IMR-90 (cell line): ENCODE measurements at regions of chr10 and their contacts with region 1.

Region 1: GRCh38 chr10:71840177-71840957 is 10.7 kb downstream of the PSAP start:
- DNase-seq: peak; percentile 96
- ATAC-seq: peak; percentile 86
- H3K4me3 ChIP-seq: no peak overlapping the region
- H3K27ac ChIP-seq: no peak overlapping the region
- H3K4me1 ChIP-seq: peaks cover 25% of the 10 kb centered on the region
- H3K27me3 ChIP-seq: no peaks in the 10 kb centered on the region
- CTCF ChIP-seq: no peak
- POLR2A ChIP-seq: no peak
- RAD21 ChIP-seq: no peak

Region 2: DNA sequence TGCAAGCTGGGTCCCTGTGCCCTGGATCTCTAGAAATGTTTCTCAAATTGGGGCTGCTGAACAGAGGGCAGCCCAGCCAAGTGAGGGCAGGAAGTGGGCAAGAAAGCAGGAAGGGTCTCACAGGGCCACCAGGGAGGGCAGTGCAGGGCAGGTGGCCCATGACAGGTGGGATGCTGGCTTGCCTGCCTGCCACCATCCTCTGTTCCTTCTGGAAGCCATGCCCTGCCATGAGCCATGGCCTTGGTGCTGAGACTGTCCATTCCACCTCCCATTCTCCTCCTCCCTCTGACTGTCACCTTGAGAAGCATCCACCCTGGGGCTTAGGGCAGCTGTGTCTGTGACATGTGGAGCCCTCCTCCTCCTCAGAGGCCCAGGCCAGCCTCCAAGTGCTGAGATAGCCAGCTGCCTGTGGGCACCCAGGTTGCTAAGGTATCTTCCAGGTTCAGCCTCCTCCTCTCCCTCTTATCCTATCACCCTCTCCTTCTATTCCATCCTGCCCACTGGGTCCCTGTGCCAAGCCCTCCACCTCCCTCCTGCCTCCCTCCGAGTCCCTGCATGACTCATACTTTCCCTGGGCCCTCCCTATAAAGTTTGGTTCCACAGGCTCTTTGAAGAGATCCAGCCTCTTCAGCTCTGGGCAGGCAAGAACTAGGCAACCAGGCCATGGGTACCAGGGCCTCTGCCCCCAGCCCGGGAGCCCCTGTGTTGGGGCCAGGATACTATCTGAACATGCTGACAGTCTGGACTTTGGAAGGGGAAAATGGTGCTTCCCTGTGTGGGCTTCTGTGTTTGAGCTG is 68.3 kb before region 1 on chr10:
- CTCF ChIA-PET with region 1: no interaction called
- POLR2A ChIA-PET with region 1: no interaction called
- dilution Hi-C with region 1: no loop called
- in situ Hi-C with region 1: no loop called
- intact Hi-C with region 1: no loop called
- DNase-seq: peak; percentile 66
- ATAC-seq: peak; percentile 32
- H3K4me3 ChIP-seq: no peak overlapping the region
- H3K27ac ChIP-seq: peak overlapping the region; percentile 7
- H3K4me1 ChIP-seq: peaks cover 44% of the 10 kb centered on the region
- H3K27me3 ChIP-seq: 0 out of 2 replicates have a peak, but pooled peaks cover 2% of the 10 kb centered on the region
- CTCF ChIP-seq: no peak
- POLR2A ChIP-seq: no peak
- RAD21 ChIP-seq: no peak

Region 3: GRCh38 chr10:71850637-71851464 is 10.5 kb after region 1 on chr10 and contains the start of gene PSAP:
- CTCF ChIA-PET with region 1: no interaction called
- POLR2A ChIA-PET with region 1: interaction called, 5 read pairs
- dilution Hi-C with region 1: no loop called
- in situ Hi-C with region 1: no loop called
- intact Hi-C with region 1: loop called (anchors 1 kb)
- DNase-seq: peak; percentile 97
- ATAC-seq: peak; percentile 99
- H3K4me3 ChIP-seq: peak within 1 kb of the TSS; percentile 82
- H3K27ac ChIP-seq: peak within 1 kb of the TSS; percentile 94
- H3K4me1 ChIP-seq: peaks cover 9% of the 10 kb centered on the region
- H3K27me3 ChIP-seq: no peaks in the 10 kb centered on the region
- CTCF ChIP-seq: no peak; the same call in 1 of the 2 replicates
- POLR2A ChIP-seq: peak; percentile 97
- RAD21 ChIP-seq: no peak
- total RNA-seq, gene PSAP: 216 and 221 TPM in 2 replicates

Region 4: DNA sequence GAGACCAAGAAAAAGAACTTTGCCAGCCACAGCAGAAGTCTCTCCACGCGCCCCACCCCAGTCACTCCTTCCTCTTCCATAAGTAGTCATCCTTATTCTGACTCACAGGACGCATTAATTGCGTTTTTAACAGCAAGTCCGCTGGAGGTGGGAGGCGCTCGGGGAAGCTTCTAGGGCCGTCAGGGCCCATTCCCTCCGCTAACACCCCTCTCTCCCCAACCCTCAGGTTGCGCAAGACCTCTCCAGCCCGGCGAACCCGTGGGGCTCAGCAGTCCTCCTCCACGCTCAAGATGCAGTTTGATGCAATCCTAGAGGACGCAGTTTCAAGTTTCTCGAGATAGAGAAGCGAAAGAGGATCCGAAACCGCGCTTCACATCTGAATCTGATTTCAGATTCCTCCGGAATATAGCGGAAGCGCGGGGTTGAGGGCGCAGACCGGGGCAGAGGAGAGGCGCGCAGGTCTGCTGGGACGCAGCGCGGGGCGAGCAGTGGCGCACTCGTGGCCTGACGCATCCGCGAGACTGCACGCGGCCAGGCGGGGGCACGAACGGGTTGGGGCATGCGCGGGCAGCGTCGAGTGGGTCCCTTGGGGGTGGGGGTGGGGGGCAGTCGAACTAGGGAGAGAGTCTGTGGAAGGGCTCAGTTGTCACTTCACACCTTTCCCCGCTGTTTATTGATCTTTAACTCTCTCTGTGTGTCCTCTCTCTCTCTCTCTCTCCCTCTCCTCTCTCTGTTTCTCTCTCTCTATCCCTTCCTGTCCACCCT is 48.4 kb after region 1 on chr10:
- CTCF ChIA-PET with region 1: no interaction called
- POLR2A ChIA-PET with region 1: no interaction called
- dilution Hi-C with region 1: no loop called
- in situ Hi-C with region 1: no loop called
- intact Hi-C with region 1: loop called (anchors 5 kb)
- DNase-seq: peak; percentile 77
- ATAC-seq: peak; percentile 97
- H3K4me3 ChIP-seq: peak overlapping the region; percentile 53
- H3K27ac ChIP-seq: peak overlapping the region; percentile 77
- H3K4me1 ChIP-seq: peaks cover 4% of the 10 kb centered on the region; the same call in 1 of the 2 replicates
- H3K27me3 ChIP-seq: peaks cover 7% of the 10 kb centered on the region
- CTCF ChIP-seq: 0 out of 2 replicates have a peak, but pooled peaks have one; percentile 14
- POLR2A ChIP-seq: 0 out of 2 replicates have a peak, but pooled peaks have one; percentile 32
- RAD21 ChIP-seq: no peak